Gastrocnemius medialis (tissue), 4 donors: ENCODE measurements at regions of chr9 and their contacts with region 1.

Region 1: DNA sequence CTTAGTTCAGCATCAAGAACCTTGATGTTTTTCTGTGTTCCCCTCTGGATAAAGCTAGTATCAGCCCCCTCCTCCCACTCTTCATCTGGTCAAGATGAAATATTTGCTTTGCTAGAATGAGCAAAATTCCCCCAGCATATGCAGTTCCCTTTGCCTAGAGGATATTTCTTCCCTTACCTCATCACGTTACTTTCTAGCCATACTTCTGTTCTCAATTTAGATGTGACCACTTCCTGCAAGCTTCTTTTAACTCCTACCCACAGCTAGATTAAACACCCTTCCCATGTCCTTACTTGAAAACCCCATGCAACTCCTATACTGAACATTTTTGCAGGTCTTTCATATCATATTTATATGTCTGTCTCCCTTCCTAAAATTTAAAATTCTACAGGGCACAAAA is 178.9 kb upstream of the TUSC1 start:
- DNase-seq: no peak
- ATAC-seq: no peak
- H3K4me3 ChIP-seq: no peak overlapping the region
- H3K27ac ChIP-seq: no peak overlapping the region
- H3K4me1 ChIP-seq: no peaks in the 10 kb centered on the region
- H3K27me3 ChIP-seq: no peaks in the 10 kb centered on the region
- CTCF ChIP-seq: no peak
- POLR2A ChIP-seq: no peak

Region 2: GRCh38 chr9:25845867-25846266 is 11.3 kb before region 1 on chr9:
- in situ Hi-C with region 1: no loop called
- intact Hi-C with region 1: loop called (anchors 1 kb)
- DNase-seq: no peak
- ATAC-seq: no peak
- H3K4me3 ChIP-seq: no peak overlapping the region
- H3K27ac ChIP-seq: no peak overlapping the region
- H3K4me1 ChIP-seq: no peaks in the 10 kb centered on the region
- H3K27me3 ChIP-seq: no peaks in the 10 kb centered on the region
- CTCF ChIP-seq: no peak
- POLR2A ChIP-seq: no peak

Region 3: GRCh38 chr9:25904701-25905100 is 47.6 kb after region 1 on chr9:
- in situ Hi-C with region 1: no loop called
- intact Hi-C with region 1: no loop called
- DNase-seq: no peak
- ATAC-seq: no peak
- H3K4me3 ChIP-seq: no peak overlapping the region
- H3K27ac ChIP-seq: no peak overlapping the region
- H3K4me1 ChIP-seq: no peaks in the 10 kb centered on the region
- H3K27me3 ChIP-seq: no peaks in the 10 kb centered on the region
- CTCF ChIP-seq: no peak
- POLR2A ChIP-seq: no peak

Region 4: GRCh38 chr9:26112724-26113123 is 255.6 kb after region 1 on chr9:
- in situ Hi-C with region 1: no loop called
- intact Hi-C with region 1: no loop called
- DNase-seq: no peak
- ATAC-seq: no peak
- H3K4me3 ChIP-seq: no peak overlapping the region
- H3K27ac ChIP-seq: no peak overlapping the region
- H3K4me1 ChIP-seq: no peaks in the 10 kb centered on the region
- H3K27me3 ChIP-seq: no peaks in the 10 kb centered on the region
- CTCF ChIP-seq: no peak
- POLR2A ChIP-seq: no peak